Endothelial cell of umbilical vein (primary cell): ENCODE measurements at regions of chr11 and their contacts with region 1.

Region 1: GRCh38 chr11:18768472-18768901 is 23.1 kb downstream of the PTPN5 start:
- DNase-seq: no peak
- H3K4me3 ChIP-seq: no peak overlapping the region
- H3K27ac ChIP-seq: no peak overlapping the region
- H3K4me1 ChIP-seq: peaks cover 11% of the 10 kb centered on the region
- H3K27me3 ChIP-seq: peaks cover 0 to 3% of the 10 kb centered on the region in 2 experiments
- CTCF ChIP-seq: no peak
- POLR2A ChIP-seq: no peak

Region 2: DNA sequence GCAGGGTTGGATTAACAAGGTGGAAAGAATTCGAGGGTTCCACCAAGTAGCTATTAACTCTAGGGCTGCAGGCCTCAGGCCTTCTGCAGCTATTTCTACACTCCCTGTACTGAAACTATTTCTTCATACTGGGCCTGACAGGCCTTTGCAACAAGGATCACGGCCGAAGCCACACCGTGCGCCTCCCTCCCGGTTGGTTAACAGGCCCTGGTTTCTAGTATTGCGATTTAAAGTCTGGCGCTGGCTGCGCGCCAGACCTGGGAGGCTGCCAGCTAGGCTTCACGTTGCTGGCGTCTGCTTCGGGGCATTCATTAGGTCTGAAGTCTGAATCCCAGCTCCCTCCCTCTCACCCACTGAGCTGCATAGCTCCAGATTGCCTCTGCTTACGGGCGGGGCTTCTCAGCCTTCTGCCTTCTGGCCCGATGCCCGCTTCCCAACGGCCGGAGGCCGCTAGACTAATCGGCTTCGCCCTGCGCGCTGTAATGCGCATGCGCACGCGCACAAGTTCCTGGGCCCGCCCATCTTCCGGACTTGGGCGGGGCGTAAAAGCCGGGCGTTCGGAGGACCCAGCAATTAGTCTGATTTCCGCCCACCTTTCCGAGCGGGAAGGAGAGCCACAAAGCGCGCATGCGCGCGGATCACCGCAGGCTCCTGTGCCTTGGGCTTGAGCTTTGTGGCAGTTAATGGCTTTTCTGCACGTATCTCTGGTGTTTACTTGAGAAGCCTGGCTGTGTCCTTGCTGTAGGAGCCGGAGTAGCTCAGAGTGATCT is 372.6 kb before region 1 on chr11:
- CTCF ChIA-PET with region 1: no interaction called
- POLR2A ChIA-PET with region 1: no interaction called
- dilution Hi-C with region 1: no loop called
- intact Hi-C with region 1: loop called (anchors 10 kb)
- DNase-seq: peak; percentile 100
- H3K4me3 ChIP-seq: peak overlapping the region; percentile 42 to 80 (median 65)
- H3K27ac ChIP-seq: peak overlapping the region; percentile 56
- H3K4me1 ChIP-seq: peaks cover 18% of the 10 kb centered on the region
- H3K27me3 ChIP-seq: no peaks in the 10 kb centered on the region
- CTCF ChIP-seq: no peak
- POLR2A ChIP-seq: peak; percentile 83

Region 3: DNA sequence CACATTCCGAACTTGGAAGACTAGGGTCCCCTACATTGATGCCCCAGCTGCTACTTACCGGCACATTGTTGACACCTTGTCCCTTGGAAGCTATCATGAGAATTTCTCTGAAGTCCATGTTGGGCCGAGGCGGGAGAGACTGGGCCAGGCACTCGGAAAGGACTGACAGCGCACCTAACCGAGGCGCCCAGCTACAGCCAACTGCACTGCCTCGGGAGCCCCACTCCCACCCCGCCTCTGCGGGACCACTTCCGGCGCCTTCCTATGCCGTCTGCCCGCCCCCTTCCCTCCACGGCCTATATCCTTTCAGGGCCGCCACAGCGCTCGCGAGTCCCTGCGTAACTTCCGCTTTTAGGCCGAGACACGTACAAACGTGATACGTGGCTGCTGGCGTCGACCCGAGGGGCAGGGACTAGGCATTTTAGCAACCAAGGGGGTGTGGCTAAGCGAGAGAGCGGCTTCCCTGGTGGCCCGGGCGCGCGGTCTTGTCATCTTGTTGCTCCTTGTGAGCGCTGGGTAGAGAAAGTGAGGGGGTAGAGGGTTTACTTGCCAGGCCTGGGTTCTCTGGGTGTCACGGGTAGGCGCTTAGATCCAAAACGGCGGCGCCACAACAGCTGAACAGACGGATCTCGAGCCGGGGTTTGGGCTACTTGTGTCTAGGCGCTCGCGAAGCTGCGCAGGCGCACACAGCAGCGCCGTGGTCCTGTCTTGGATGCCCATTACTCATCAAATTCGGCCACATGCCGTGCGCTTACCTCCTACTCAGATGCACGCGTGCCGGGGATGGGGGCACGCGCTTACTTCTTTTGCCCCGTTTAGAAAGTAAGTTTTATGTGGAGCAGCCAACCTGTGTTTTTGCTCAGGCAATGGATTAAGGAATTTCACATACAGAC is 134.1 kb before region 1 on chr11 and contains the start of gene SPTY2D1:
- CTCF ChIA-PET with region 1: interaction called, 6 read pairs
- POLR2A ChIA-PET with region 1: no interaction called
- dilution Hi-C with region 1: no loop called
- intact Hi-C with region 1: loop called (anchors 1 kb)
- DNase-seq: peak; percentile 99
- H3K4me3 ChIP-seq: peak within 1 kb of the TSS; percentile 79 to 99 (median 97)
- H3K27ac ChIP-seq: peak within 1 kb of the TSS; percentile 83
- H3K4me1 ChIP-seq: peaks cover 16% of the 10 kb centered on the region
- H3K27me3 ChIP-seq: peaks cover 0 to 1% of the 10 kb centered on the region in 2 experiments
- CTCF ChIP-seq: no peak
- POLR2A ChIP-seq: peak; percentile 96
- total RNA-seq, gene SPTY2D1: 13.7 and 18.7 TPM in 2 replicates

Region 4: GRCh38 chr11:18731949-18732821 is 36.3 kb before region 1 on chr11:
- CTCF ChIA-PET with region 1: interaction called, 21 read pairs
- POLR2A ChIA-PET with region 1: no interaction called
- dilution Hi-C with region 1: no loop called
- intact Hi-C with region 1: loop called (anchors 1 kb)
- DNase-seq: peak; percentile 60
- H3K4me3 ChIP-seq: no peak overlapping the region
- H3K27ac ChIP-seq: no peak overlapping the region
- H3K4me1 ChIP-seq: no peaks in the 10 kb centered on the region
- H3K27me3 ChIP-seq: peaks cover 0 to 3% of the 10 kb centered on the region in 2 experiments
- CTCF ChIP-seq: peak; percentile 92 to 93
- POLR2A ChIP-seq: no peak

Region 5: DNA sequence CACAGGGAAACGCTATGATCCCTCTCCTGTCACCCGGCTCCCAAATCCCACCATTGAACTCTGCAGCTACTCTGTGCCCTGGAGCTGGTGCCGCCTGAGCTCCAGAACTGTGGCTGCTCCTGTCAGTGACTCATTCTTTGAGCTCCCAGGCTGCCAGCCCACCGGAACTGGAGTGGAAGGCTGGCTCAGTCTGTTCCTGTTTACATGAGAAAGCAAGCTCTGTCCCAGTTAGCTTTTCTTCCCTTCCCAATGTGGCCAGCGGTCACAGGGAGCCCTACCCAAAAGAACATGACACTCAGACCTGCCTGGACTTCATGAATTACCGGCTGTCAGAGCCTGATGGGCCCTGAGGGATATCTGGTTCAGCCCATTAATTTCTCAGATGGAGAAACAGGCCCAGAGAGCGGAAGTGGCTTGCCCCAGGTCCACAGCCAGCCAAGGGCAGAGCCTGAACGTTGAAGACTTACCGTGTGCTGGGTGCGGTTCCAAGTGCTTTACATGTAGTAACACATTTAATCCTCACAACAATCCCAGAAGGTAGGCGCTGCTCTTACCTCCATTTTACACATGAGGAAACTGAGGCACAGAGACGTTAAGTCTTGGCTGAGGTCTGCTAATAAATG is 18.7 kb before region 1 on chr11:
- CTCF ChIA-PET with region 1: interaction called, 27 read pairs
- POLR2A ChIA-PET with region 1: no interaction called
- dilution Hi-C with region 1: no loop called
- intact Hi-C with region 1: loop called (anchors 1 kb)
- DNase-seq: peak; percentile 84
- H3K4me3 ChIP-seq: no peak overlapping the region
- H3K27ac ChIP-seq: peak overlapping the region; percentile 55
- H3K4me1 ChIP-seq: peaks cover 12% of the 10 kb centered on the region
- H3K27me3 ChIP-seq: no peaks in the 10 kb centered on the region
- CTCF ChIP-seq: no peak
- POLR2A ChIP-seq: peak; percentile 28

Region 6: DNA sequence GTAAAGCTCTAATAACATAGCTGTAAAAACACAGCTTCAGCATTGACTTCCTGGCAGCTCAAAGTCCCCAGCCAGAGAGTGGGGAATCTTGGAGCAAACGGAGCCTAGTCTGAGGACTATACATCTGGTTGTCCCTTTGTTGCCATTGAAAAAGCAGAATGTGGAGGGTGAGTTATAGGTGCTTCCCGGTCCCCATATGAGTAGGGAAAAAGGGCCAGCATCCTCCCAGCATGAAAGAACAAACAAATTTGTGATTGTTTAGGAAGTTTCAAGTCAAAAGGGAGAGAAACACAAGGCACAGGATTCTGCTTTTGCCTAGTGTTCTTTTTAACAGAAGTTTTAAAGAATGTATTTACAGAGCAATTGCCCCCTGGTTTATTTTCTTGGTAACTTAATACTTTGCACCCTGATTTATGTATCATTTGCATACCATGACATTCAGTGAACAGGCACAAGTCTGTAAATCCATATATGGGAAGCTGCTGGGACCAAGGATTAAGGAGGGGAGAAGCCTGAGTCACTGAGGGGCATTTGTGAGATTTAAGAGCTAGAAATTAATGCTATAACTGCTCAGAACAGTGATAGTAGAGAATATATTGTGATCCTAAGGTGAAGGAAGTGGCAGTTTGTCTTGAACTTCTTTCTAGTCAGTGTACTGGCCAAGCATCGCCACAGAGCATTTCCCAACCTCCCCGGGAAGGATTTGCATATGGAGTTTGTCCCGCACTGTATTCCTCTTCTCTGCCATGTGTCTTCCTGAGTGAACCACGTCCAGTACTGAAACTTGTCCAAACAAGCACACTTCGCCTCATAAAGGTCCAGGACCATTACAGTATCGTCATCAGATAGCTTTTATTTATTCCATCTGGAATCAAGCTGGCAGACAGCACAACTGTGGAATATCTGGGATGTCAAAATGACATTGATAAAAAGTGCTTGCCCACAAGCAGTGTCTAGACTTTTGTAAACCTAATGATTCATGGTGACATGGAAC is 1288.8 kb after region 1 on chr11:
- CTCF ChIA-PET with region 1: no interaction called
- POLR2A ChIA-PET with region 1: no interaction called
- dilution Hi-C with region 1: no loop called
- intact Hi-C with region 1: no loop called
- DNase-seq: no peak
- H3K4me3 ChIP-seq: no peak overlapping the region
- H3K27ac ChIP-seq: no peak overlapping the region
- H3K4me1 ChIP-seq: no peaks in the 10 kb centered on the region
- H3K27me3 ChIP-seq: no peaks in the 10 kb centered on the region
- CTCF ChIP-seq: no peak
- POLR2A ChIP-seq: no peak